ENCODE measurements at regions of chr3 and their contacts with region 1.

Region 1: GRCh38 chr3:62558549-62559112 is 185.3 kb upstream of the FEZF2 start:
- DNase-seq: no peak
- H3K4me3 Mint-ChIP-seq: no peak overlapping the region
- H3K27ac Mint-ChIP-seq: no peak overlapping the region
- H3K4me1 Mint-ChIP-seq: no peaks in the 10 kb centered on the region
- H3K27me3 Mint-ChIP-seq: no peaks in the 10 kb centered on the region

Region 2: DNA sequence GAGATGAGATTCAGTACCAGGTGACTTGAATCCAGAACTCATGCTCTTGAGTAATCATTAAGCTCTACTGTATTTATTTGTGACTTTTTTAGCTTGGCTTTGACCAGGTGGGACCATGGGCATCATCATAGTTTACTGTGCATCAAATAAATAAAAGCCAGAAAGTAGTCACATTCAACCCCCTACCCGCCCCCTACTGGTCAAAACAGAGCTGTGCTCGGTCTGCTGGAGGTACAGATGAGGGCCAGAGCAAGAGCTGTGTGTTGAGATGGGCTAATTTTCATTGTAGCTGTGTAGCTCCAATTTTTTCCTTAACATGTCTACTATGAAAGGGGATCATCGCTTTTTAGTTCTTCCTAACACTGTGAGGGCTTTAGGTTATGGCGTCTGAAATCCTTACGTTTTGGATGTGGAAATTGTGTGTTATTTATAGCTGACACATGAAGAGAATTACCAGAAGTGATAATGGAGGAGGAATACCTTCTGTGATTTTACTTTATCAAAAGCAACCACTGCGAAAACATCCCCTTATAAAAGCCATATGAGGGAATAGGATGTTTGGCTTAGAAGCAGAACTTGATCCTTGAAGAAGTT is 622.2 kb before region 1 on chr3:
- CTCF ChIA-PET with region 1: no interaction called
- POLR2A ChIA-PET with region 1: no interaction called
- intact Hi-C with region 1: no loop called
- DNase-seq: peak; percentile 19
- H3K4me3 Mint-ChIP-seq: no peak overlapping the region
- H3K27ac Mint-ChIP-seq: no peak overlapping the region
- H3K4me1 Mint-ChIP-seq: no peaks in the 10 kb centered on the region
- H3K27me3 Mint-ChIP-seq: no peaks in the 10 kb centered on the region

Region 3: DNA sequence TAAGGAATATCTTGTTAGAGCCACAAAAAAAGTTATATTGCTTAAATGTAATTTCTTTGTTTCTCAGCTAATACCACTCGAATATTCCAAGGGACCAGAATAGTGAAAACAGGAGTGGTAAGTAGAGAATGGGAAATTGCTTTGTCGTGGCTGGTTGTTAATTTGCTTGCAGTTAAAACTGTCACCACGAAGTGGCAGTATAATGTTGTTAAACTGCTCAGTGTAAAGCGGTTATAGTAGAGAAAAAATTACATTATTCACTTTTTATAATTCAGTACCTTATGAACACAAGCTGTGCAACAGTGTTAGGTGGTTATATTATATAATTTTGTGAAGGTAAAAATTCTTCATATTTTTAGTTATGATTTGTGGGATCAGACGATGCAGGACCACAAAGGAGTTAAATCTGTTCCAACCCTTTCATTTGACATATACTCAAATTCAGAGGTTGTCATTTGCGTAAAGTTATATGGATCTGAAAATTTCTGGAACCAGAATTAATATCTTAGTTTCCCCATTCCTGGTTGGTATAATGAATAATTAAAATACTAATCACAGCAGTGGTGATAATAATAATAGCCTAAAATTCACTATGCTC is 357.1 kb before region 1 on chr3:
- CTCF ChIA-PET with region 1: interaction called, 5 read pairs
- POLR2A ChIA-PET with region 1: no interaction called
- intact Hi-C with region 1: loop called (anchors 5 kb)
- DNase-seq: no peak
- H3K4me3 Mint-ChIP-seq: no peak overlapping the region
- H3K27ac Mint-ChIP-seq: no peak overlapping the region
- H3K4me1 Mint-ChIP-seq: no peaks in the 10 kb centered on the region
- H3K27me3 Mint-ChIP-seq: peaks cover 2% of the 10 kb centered on the region

Region 4: GRCh38 chr3:62332835-62333244 is 225.8 kb before region 1 on chr3:
- CTCF ChIA-PET with region 1: interaction called, 3 read pairs
- POLR2A ChIA-PET with region 1: no interaction called
- intact Hi-C with region 1: loop called (anchors 2 kb)
- DNase-seq: no peak
- H3K4me3 Mint-ChIP-seq: no peak overlapping the region
- H3K27ac Mint-ChIP-seq: no peak overlapping the region
- H3K4me1 Mint-ChIP-seq: no peaks in the 10 kb centered on the region
- H3K27me3 Mint-ChIP-seq: no peaks in the 10 kb centered on the region

Region 5: GRCh38 chr3:62368705-62369475 is 189.7 kb before region 1 on chr3:
- CTCF ChIA-PET with region 1: no interaction called
- POLR2A ChIA-PET with region 1: no interaction called
- intact Hi-C with region 1: no loop called
- DNase-seq: no peak
- H3K4me3 Mint-ChIP-seq: no peak overlapping the region
- H3K27ac Mint-ChIP-seq: no peak overlapping the region
- H3K4me1 Mint-ChIP-seq: peaks cover 6% of the 10 kb centered on the region
- H3K27me3 Mint-ChIP-seq: peaks cover 69% of the 10 kb centered on the region

Region 6: DNA sequence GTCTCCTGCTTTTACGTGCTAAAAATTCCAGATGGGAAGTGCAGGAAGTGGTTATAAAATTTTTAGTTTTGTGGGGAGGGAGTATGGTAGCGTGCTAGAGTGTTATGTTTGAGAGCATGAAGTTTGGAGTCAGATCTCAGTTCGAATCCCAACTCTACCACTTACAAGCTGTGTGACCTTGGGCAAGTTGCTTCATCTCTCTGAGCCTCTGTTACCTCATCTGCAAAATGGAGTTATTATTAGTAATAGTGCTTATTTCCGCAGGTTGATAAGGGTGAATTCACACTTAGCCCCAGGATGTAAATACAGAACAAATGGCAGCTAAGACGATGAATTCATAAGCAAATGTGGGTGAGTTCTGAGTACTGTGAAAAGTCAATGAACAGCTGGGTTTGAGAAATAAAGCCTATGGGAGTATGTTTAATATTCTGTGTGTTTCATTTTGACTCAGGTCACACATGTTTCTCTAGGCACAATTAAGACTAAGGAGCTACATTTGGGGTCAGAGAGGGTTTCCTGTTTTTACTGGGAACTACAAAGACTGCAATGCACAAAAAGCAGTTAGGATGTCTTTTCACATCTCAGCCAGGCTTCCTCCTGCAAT is 112.2 kb before region 1 on chr3:
- CTCF ChIA-PET with region 1: no interaction called
- POLR2A ChIA-PET with region 1: no interaction called
- intact Hi-C with region 1: no loop called
- DNase-seq: no peak
- H3K4me3 Mint-ChIP-seq: no peak overlapping the region
- H3K27ac Mint-ChIP-seq: no peak overlapping the region
- H3K4me1 Mint-ChIP-seq: peaks cover 18% of the 10 kb centered on the region
- H3K27me3 Mint-ChIP-seq: no peaks in the 10 kb centered on the region

Measured in activated CD4-positive, alpha-beta memory T cell treated with anti-CD3 and anti-CD28 coated beads for 36 hours (primary cell).